ENCODE measurements at regions of chr22 and their contacts with region 1.

Region 1: GRCh38 chr22:49930739-49931412 is 12.4 kb downstream of the CRELD2 start:
- DNase-seq: peak; percentile 89 to 91 (median 90)
- H3K4me3 ChIP-seq: peak overlapping the region in 1 of 7 experiments; percentile 14
- H3K27ac ChIP-seq: peak overlapping the region; percentile 40 to 49
- H3K4me1 ChIP-seq: peaks cover 11 to 63% (median 58%) of the 10 kb centered on the region in 4 experiments
- H3K27me3 ChIP-seq: no peaks in the 10 kb centered on the region

Region 2: DNA sequence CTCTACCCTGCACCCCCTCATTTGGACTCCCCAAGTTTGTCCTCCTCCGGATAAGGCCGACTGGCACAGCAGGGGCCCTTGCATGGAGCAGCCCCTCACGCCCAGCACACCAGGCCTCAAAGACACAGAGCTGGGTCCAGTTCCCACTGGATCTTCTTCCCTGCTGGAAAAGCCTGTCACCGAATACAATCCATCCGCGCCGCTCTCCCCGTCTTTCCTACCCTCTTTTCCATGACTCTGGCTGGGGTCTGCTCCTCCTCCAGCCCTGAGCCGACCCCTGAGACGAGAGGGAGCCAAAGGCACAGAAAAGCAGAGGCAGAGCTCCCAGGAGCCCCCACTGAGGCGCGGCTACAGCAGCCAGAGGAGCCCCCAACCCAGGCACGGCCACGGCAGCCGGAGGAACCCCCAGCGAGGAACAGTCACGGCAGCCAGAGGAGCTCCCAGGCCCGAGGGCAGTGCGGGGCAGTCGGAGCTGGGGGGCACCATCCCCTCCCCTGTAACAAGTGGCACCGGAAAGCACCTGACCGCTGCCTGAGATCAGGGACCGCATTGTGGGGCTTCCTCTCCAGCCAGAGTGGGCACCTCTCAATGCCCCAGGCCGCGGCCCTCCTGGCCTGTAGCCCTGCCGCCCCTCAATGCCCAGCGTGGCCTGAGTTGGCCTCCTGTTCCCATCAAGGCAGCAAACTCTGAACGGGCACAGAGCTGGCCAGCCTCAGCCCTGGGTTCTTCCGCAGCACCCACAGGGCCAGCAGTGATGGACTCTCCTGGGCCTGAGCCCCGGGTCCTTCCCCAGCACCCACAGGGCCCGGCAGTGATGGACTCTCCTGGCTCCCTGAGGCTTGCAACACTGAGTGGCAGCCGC is 24.6 kb before region 1 on chr22:
- CTCF ChIA-PET with region 1: no interaction called
- POLR2A ChIA-PET with region 1: no interaction called
- DNase-seq: no peak
- H3K4me3 ChIP-seq: no peak overlapping the region
- H3K27ac ChIP-seq: no peak overlapping the region
- H3K4me1 ChIP-seq: no peaks in the 10 kb centered on the region
- H3K27me3 ChIP-seq: no peaks in the 10 kb centered on the region

Region 3: DNA sequence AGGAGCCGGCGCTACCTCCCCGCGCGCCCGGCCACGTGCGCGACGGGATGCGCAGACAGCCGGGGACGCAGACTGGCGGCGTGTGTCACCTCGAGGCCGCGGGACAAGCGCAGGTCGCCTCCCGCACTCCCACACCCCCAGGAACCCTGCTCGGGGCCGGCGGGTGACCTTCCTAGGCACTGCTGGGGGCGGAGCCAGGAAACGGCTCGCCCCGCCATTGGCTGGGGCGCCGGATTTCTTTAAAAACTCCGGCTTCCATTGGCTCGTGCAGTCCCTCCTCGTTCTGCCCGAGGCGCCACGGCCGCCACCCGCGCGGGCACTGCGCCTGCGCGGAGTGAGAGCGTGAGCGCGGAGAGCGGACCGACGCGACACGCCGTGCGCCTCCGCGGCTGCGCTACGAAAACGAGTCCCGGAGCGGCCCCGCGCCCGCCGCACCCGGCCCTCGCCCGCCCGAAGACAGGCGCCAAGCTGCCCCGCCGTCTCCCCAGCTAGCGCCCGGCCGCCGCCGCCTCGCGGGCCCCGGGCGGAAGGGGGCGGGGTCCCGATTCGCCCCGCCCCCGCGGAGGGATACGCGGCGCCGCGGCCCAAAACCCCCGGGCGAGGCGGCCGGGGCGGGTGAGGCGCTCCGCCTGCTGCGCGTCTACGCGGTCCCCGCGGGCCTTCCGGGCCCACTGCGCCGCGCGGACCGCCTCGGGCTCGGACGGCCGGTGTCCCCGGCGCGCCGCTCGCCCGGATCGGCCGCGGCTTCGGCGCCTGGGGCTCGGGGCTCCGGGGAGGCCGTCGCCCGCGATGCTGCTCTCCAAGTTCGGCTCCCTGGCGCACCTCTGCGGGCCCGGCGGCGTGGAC is 29.5 kb after region 1 on chr22 and contains the start of gene PIM3:
- CTCF ChIA-PET with region 1: interaction called, 16 read pairs
- POLR2A ChIA-PET with region 1: interaction called, 54 read pairs
- DNase-seq: peak; percentile 95 to 97 (median 97)
- H3K4me3 ChIP-seq: peak within 1 kb of the TSS; percentile 77 to 95 (median 89)
- H3K27ac ChIP-seq: peak within 1 kb of the TSS; percentile 54 to 78
- H3K4me1 ChIP-seq: peaks cover 0 to 43% (median 37%) of the 10 kb centered on the region in 4 experiments
- H3K27me3 ChIP-seq: no peaks in the 10 kb centered on the region

Region 4: GRCh38 chr22:49970528-49971231 is 39.8 kb after region 1 on chr22:
- CTCF ChIA-PET with region 1: interaction called, 22 read pairs
- POLR2A ChIA-PET with region 1: interaction called, 14 read pairs
- DNase-seq: peak; percentile 98 to 99 (median 99)
- H3K4me3 ChIP-seq: peak overlapping the region in 6 of 7 experiments; percentile 15 to 70 (median 50)
- H3K27ac ChIP-seq: peak overlapping the region in 1 of 2 experiments; percentile 34
- H3K4me1 ChIP-seq: peaks cover 0 to 53% (median 48%) of the 10 kb centered on the region in 4 experiments
- H3K27me3 ChIP-seq: peaks cover 0 to 11% (median 0%) of the 10 kb centered on the region in 5 experiments

Region 5: GRCh38 chr22:49983148-49984042 is 52.5 kb after region 1 on chr22:
- CTCF ChIA-PET with region 1: interaction called, 11 read pairs
- POLR2A ChIA-PET with region 1: interaction called, 3 read pairs
- DNase-seq: peak; percentile 57 to 76 (median 75)
- H3K4me3 ChIP-seq: peak overlapping the region in 1 of 7 experiments; percentile 11
- H3K27ac ChIP-seq: no peak overlapping the region
- H3K4me1 ChIP-seq: peaks cover 0 to 10% (median 4%) of the 10 kb centered on the region in 4 experiments
- H3K27me3 ChIP-seq: peaks cover 0 to 21% (median 7%) of the 10 kb centered on the region in 5 experiments

Region 6: GRCh38 chr22:49992921-49993648 is 62.2 kb after region 1 on chr22:
- CTCF ChIA-PET with region 1: interaction called, 47 read pairs
- POLR2A ChIA-PET with region 1: no interaction called
- DNase-seq: peak; percentile 60 to 72 (median 72)
- H3K4me3 ChIP-seq: peak overlapping the region in 1 of 7 experiments; percentile 30
- H3K27ac ChIP-seq: no peak overlapping the region
- H3K4me1 ChIP-seq: peaks cover 0 to 10% (median 4%) of the 10 kb centered on the region in 4 experiments
- H3K27me3 ChIP-seq: no peaks in the 10 kb centered on the region

Region 7: GRCh38 chr22:50030297-50031188 is 99.7 kb after region 1 on chr22:
- CTCF ChIA-PET with region 1: interaction called, 63 read pairs
- POLR2A ChIA-PET with region 1: interaction called, 19 read pairs
- DNase-seq: peak; percentile 87 to 93 (median 93)
- H3K4me3 ChIP-seq: peak overlapping the region in 2 of 7 experiments; percentile 32 to 60
- H3K27ac ChIP-seq: no peak overlapping the region
- H3K4me1 ChIP-seq: peaks cover 0 to 41% (median 21%) of the 10 kb centered on the region in 4 experiments
- H3K27me3 ChIP-seq: peaks cover 0 to 2% (median 0%) of the 10 kb centered on the region in 5 experiments

Measured in common myeloid progenitor, CD34-positive (primary cell).